Transverse colon (tissue), 4 donors: ENCODE measurements at regions of chr13 and their contacts with region 1.

Region 1: GRCh38 chr13:36346222-36347083 is at the start of gene SPART:
- DNase-seq: peak; percentile 90
- H3K4me3 ChIP-seq: peak within 1 kb of the TSS; percentile 58 to 75 (median 68)
- H3K27ac ChIP-seq: peak within 1 kb of the TSS; percentile 94 to 98 (median 95)
- H3K4me1 ChIP-seq: peaks cover 0 to 20% (median 4%) of the 10 kb centered on the region in 4 donors
- H3K27me3 ChIP-seq: peaks cover 17% of the 10 kb centered on the region
- CTCF ChIP-seq: peak; percentile 85 to 95 (median 87)
- EP300 ChIP-seq: no peak
- POLR2A ChIP-seq: peak; percentile 18
- total RNA-seq, gene SPART: 14.1 to 27.6 (median 18.2) TPM

Region 2: DNA sequence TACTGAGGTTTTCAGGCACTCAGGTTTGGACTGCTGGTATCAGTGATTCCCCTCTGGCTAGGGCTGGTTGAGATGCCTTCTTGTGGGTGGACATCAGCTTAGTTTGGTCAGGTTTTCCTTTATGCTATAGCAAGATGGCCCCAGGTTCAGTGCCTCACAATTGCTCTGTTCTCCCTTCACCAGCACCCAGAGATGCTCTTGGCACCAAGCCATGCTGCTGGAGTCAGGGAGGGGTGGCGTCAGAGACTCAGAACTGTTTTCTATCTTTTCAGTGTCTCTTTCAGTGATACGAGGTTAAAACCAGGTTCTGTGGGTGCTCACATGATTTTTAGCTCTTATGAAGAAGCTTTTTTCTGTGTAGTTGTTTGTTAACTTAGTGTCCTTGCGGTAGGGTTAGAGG is 1307.4 kb before region 1 on chr13:
- in situ Hi-C with region 1: no loop called
- intact Hi-C with region 1: no loop called
- DNase-seq: no peak
- H3K4me3 ChIP-seq: no peak overlapping the region
- H3K27ac ChIP-seq: no peak overlapping the region
- H3K4me1 ChIP-seq: no peaks in the 10 kb centered on the region
- H3K27me3 ChIP-seq: no peaks in the 10 kb centered on the region
- CTCF ChIP-seq: no peak
- EP300 ChIP-seq: no peak
- POLR2A ChIP-seq: no peak

Region 3: GRCh38 chr13:36006348-36006747 is 340.1 kb before region 1 on chr13:
- in situ Hi-C with region 1: no loop called
- intact Hi-C with region 1: no loop called
- DNase-seq: no peak
- H3K4me3 ChIP-seq: no peak overlapping the region
- H3K27ac ChIP-seq: no peak overlapping the region
- H3K4me1 ChIP-seq: no peaks in the 10 kb centered on the region
- H3K27me3 ChIP-seq: no peaks in the 10 kb centered on the region
- CTCF ChIP-seq: no peak
- EP300 ChIP-seq: no peak
- POLR2A ChIP-seq: no peak

Region 4: DNA sequence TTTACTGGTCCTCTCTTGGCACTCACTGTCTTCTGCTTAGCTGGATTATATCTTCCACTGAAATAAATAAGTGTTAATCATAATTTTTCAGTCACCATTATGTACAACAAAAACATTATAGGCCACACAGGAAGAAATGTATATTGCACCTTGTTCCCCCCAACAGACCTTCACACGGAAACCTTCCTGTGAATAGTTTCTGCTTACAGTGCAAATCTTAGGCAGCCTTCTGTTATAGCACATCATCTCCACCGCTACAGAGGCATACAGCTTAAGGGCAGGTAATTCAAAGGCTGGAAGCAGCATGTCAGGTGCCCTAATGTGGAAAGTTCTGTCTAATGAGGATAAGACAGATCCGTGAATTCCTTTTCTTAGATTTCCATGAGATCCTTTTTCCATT is 115.2 kb before region 1 on chr13:
- in situ Hi-C with region 1: no loop called
- intact Hi-C with region 1: no loop called
- DNase-seq: no peak
- H3K4me3 ChIP-seq: no peak overlapping the region
- H3K27ac ChIP-seq: no peak overlapping the region
- H3K4me1 ChIP-seq: no peaks in the 10 kb centered on the region
- H3K27me3 ChIP-seq: no peaks in the 10 kb centered on the region
- CTCF ChIP-seq: no peak
- EP300 ChIP-seq: no peak
- POLR2A ChIP-seq: no peak

Region 5: GRCh38 chr13:36282818-36283445 is 63.5 kb before region 1 on chr13:
- in situ Hi-C with region 1: no loop called
- intact Hi-C with region 1: loop called (anchors 10 kb)
- DNase-seq: no peak
- H3K4me3 ChIP-seq: no peak overlapping the region
- H3K27ac ChIP-seq: no peak overlapping the region
- H3K4me1 ChIP-seq: peaks cover 0 to 3% (median 0%) of the 10 kb centered on the region in 4 donors
- H3K27me3 ChIP-seq: no peaks in the 10 kb centered on the region
- CTCF ChIP-seq: peak; percentile 46 to 78 (median 73)
- EP300 ChIP-seq: no peak
- POLR2A ChIP-seq: no peak

Region 6: DNA sequence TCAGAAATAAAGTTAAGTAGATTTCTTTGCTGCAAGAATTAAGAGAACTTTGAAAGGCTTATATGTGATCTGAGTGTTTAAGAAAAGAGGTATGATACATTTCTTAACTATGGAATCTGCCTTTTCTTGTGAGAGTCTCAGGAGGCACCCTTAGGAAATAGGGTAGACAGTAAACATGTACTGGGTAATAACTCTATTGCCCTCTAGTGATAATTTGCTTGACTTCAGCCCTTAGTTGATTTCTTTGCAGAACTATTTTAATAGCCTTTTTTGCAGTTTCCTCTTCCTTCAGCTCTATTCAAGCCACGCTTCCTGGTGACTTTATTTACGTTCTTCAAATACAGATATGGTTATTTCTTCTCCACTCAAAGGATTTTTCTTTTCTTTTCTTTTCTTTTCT is 48.8 kb after region 1 on chr13:
- in situ Hi-C with region 1: no loop called
- intact Hi-C with region 1: loop called (anchors 5 kb)
- DNase-seq: no peak
- H3K4me3 ChIP-seq: no peak overlapping the region
- H3K27ac ChIP-seq: no peak overlapping the region
- H3K4me1 ChIP-seq: no peaks in the 10 kb centered on the region
- H3K27me3 ChIP-seq: no peaks in the 10 kb centered on the region
- CTCF ChIP-seq: peak in 2 of 5 experiments; percentile 19 to 35
- EP300 ChIP-seq: no peak
- POLR2A ChIP-seq: no peak